ENCODE measurements at regions of chr2 and their contacts with region 1.

Region 1: GRCh38 chr2:6909431-6910385 is 7.5 kb upstream of the RNF144A start:
- DNase-seq: peak in 5 of 9 experiments; percentile 26 to 84 (median 53)
- ATAC-seq: peak; percentile 69
- H3K4me3 ChIP-seq: peak overlapping the region; percentile 1 to 19
- H3K4me3 Mint-ChIP-seq: peak overlapping the region; percentile 67
- H3K27ac ChIP-seq: peak overlapping the region; percentile 1 to 60
- H3K27ac Mint-ChIP-seq: peak overlapping the region; percentile 88
- H3K4me1 ChIP-seq: peaks cover 91% of the 10 kb centered on the region
- H3K4me1 Mint-ChIP-seq: peaks cover 89% of the 10 kb centered on the region
- H3K27me3 ChIP-seq: no peaks in the 10 kb centered on the region
- H3K27me3 Mint-ChIP-seq: no peaks in the 10 kb centered on the region
- CTCF ChIP-seq: no peak

Region 2: GRCh38 chr2:6877402-6878304 is 32.1 kb before region 1 on chr2 and contains the start of gene RSAD2:
- CTCF ChIA-PET with region 1: interaction called, 5 read pairs
- POLR2A ChIA-PET with region 1: interaction called, 6 read pairs
- intact Hi-C with region 1: loop called in 1 of 2 experiments (anchors 2 kb)
- DNase-seq: peak in 7 of 9 experiments; percentile 16 to 81 (median 47)
- ATAC-seq: peak; percentile 84
- H3K4me3 ChIP-seq: peak within 1 kb of the TSS; percentile 56 to 63
- H3K4me3 Mint-ChIP-seq: peak within 1 kb of the TSS; percentile 88
- H3K27ac ChIP-seq: peak within 1 kb of the TSS; percentile 34 to 47
- H3K27ac Mint-ChIP-seq: peak within 1 kb of the TSS; percentile 87
- H3K4me1 ChIP-seq: peaks cover 59% of the 10 kb centered on the region
- H3K4me1 Mint-ChIP-seq: peaks cover 66% of the 10 kb centered on the region
- H3K27me3 ChIP-seq: no peaks in the 10 kb centered on the region
- H3K27me3 Mint-ChIP-seq: no peaks in the 10 kb centered on the region
- CTCF ChIP-seq: no peak
- total RNA-seq, gene RSAD2: 1.8 to 2.1 TPM

Measured in CD8-positive, alpha-beta T cell (primary cell).